Cardiac septum (tissue), 1 donor: ENCODE measurements at regions of chr20 and their contacts with region 1.

Region 1: GRCh38 chr20:16803965-16804792 is 56.0 kb downstream of the OTOR start:
- DNase-seq: no peak

Region 2: DNA sequence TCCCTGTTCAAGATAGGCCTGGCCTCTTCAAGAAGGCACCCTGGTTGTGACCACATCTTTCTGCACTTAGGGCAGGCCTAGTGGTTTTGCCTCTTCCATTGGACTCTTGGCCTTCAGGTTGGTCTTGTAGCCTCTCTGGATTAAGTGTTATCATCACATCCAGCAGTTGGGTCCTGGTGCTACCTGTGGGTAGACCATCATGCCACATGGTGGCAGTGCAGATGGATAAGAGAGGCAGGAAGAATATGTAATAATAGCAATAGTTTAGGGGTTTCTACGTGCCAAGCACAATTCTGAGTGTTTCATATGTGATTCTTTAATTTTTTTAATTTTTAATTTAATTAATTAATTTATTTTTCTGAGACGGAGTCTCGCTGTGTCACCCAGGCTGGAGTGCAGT is 102.9 kb before region 1 on chr20:
- intact Hi-C with region 1: no loop called
- DNase-seq: no peak

Region 3: GRCh38 chr20:16712511-16712947 is 91.7 kb before region 1 on chr20:
- intact Hi-C with region 1: no loop called
- DNase-seq: no peak

Region 4: DNA sequence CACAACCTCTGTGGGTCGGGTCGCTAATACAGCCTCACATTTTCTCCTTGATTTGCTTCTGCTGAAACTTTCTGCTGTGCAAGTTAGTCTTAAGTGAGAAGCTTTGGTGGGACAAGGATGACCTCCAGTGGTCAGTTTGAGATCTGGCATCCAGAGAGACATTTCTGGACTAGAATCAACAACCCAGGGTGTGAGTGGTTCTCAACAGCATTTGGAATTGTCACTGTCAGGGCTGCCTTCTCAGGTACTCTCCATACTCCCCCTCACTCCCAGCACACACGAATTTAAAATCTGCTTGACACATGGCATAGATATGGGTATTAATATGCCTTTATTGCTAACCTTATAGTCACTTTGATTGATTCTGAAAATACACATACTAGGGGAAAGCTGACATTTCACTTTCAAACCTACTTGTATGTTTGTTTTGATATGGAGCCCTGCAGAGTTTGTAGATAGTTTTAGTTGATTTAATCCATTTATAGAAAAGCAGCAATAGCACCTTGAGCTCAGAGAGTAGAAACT is 42.8 kb before region 1 on chr20:
- intact Hi-C with region 1: no loop called
- DNase-seq: no peak

Region 5: GRCh38 chr20:17431621-17432364 is 627.6 kb after region 1 on chr20:
- intact Hi-C with region 1: loop called (anchors 2 kb)
- DNase-seq: no peak